Activated B cell treated with CpG ODN at 0.5 μM for 24 hours (primary cell): ENCODE measurements at regions of chr18 and their contacts with region 1.

Region 1: GRCh38 chr18:46190667-46191066 is 86.5 kb downstream of the HAUS1 start:
- DNase-seq: no peak
- ATAC-seq: no peak
- H3K4me3 Mint-ChIP-seq: no peak overlapping the region
- H3K27ac Mint-ChIP-seq: peak overlapping the region; percentile 12
- H3K4me1 Mint-ChIP-seq: peaks cover 26% of the 10 kb centered on the region
- H3K27me3 Mint-ChIP-seq: no peaks in the 10 kb centered on the region
- CTCF ChIP-seq: no peak

Region 2: GRCh38 chr18:46207985-46208384 is 17.3 kb after region 1 on chr18:
- CTCF ChIA-PET with region 1: no interaction called
- POLR2A ChIA-PET with region 1: interaction called, 7 read pairs
- intact Hi-C with region 1: loop called (anchors 2 kb)
- DNase-seq: no peak
- ATAC-seq: no peak
- H3K4me3 Mint-ChIP-seq: no peak overlapping the region
- H3K27ac Mint-ChIP-seq: no peak overlapping the region
- H3K4me1 Mint-ChIP-seq: peaks cover 82% of the 10 kb centered on the region
- H3K27me3 Mint-ChIP-seq: no peaks in the 10 kb centered on the region
- CTCF ChIP-seq: no peak